Activated CD8-positive, alpha-beta memory T cell treated with anti-CD3 and anti-CD28 coated beads, Interleukin-2, amount 10 ng/mL, durations not matched to agents 7 days and 5 days (primary cell): ENCODE measurements at regions of chr19 and their contacts with region 1.

Region 1: GRCh38 chr19:10251792-10252694 is at the start of gene MRPL4:
- DNase-seq: peak; percentile 99
- ATAC-seq: peak; percentile 98
- H3K4me3 Mint-ChIP-seq: peak within 1 kb of the TSS; percentile 99
- H3K27ac Mint-ChIP-seq: peak within 1 kb of the TSS; percentile 96
- H3K4me1 Mint-ChIP-seq: peaks cover 37% of the 10 kb centered on the region
- H3K27me3 Mint-ChIP-seq: no peaks in the 10 kb centered on the region
- total RNA-seq, gene MRPL4: 85.4 to 112 TPM

Region 2: GRCh38 chr19:9934132-9934950 is 317.7 kb before region 1 on chr19:
- CTCF ChIA-PET with region 1: interaction called, 14 read pairs
- DNase-seq: peak; percentile 86
- ATAC-seq: peak; percentile 83
- H3K4me3 Mint-ChIP-seq: no peak overlapping the region
- H3K27ac Mint-ChIP-seq: no peak overlapping the region
- H3K4me1 Mint-ChIP-seq: peaks cover 14% of the 10 kb centered on the region
- H3K27me3 Mint-ChIP-seq: peaks cover 47% of the 10 kb centered on the region

Region 3: DNA sequence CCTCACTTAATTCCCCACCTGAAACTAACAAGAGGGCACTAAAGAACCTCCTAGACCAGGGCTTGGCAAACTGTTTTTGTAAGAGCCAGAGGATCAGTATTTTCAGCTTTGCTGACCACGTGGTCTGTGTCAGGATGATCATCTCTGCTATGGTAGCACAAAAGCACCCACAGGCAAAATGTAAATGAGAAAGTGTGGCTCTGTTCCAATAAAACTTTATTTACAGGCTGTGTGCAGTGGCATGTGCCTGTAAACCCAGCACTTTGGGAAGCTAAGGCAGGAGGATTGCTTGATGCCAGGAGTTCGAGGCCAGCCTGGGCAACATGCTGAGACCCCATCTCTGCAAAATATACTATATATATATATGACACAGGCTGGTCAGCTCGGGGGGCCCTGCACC is 88.5 kb before region 1 on chr19:
- CTCF ChIA-PET with region 1: interaction called, 11 read pairs
- DNase-seq: no peak
- ATAC-seq: no peak
- H3K4me3 Mint-ChIP-seq: no peak overlapping the region
- H3K27ac Mint-ChIP-seq: no peak overlapping the region
- H3K4me1 Mint-ChIP-seq: peaks cover 5% of the 10 kb centered on the region
- H3K27me3 Mint-ChIP-seq: no peaks in the 10 kb centered on the region

Region 4: DNA sequence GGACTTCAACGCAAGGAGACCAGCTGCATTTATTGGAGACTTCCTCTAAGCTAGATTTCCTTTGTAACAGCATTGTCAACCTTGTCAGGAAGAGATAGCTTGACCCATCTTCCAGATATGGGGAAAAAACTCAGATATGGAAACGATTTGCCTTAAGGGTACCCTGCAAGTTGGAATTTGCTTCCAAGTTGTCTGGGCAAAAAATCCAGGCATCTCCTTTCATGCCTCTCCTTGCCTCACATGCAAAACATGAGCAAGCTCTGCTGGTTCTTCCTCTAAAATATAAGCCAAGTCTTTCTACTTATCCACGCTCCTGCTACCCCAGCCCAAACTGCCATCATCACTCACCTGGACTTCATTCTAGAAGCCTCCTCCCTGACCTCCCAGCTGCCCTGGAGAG is 50.9 kb before region 1 on chr19:
- CTCF ChIA-PET with region 1: interaction called, 11 read pairs
- DNase-seq: no peak
- ATAC-seq: no peak
- H3K4me3 Mint-ChIP-seq: no peak overlapping the region
- H3K27ac Mint-ChIP-seq: peak overlapping the region; percentile 35
- H3K4me1 Mint-ChIP-seq: peaks cover 13% of the 10 kb centered on the region
- H3K27me3 Mint-ChIP-seq: no peaks in the 10 kb centered on the region

Region 5: DNA sequence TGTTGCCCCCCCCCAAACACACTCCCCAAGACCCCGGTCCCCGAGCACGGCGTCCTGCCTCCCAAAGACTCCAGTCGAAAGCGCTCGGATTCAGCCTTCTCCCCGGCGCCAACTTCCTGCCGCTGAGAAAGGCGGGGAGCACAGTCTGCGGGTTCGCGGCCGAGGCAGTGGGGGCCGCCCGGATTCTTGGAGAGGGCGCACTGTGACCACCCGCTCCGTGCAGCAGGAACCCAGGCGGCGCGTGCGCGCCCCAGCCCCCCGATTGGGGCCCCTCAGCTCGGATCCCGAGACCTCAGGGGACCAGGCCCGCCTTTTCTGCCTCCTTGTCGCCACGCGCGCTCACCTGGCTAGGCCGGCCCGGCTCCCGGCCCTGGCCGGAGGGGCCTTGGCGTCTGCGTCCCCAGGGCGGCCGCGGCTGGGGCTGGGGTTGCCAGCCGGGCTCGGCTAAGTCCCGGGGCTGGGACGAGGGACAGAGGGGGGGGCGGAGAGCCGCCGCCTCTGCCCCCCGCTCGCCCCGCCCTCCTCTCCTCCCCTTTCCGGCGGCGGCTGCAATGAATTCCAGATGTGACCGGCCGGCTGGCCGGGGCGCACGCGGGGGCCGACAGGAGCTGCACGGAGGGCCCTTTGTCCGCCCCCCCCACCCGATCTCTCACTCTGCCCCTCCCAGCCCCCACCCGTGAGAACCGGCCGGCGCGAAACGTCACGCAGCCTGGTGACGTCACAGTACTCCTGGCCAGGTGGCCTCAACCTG is 21.0 kb before region 1 on chr19 and contains the start of gene S1PR2:
- CTCF ChIA-PET with region 1: interaction called, 55 read pairs
- DNase-seq: peak; percentile 77
- ATAC-seq: peak; percentile 69
- H3K4me3 Mint-ChIP-seq: peak within 1 kb of the TSS; percentile 81
- H3K27ac Mint-ChIP-seq: peak within 1 kb of the TSS; percentile 69
- H3K4me1 Mint-ChIP-seq: peaks cover 26% of the 10 kb centered on the region
- H3K27me3 Mint-ChIP-seq: no peaks in the 10 kb centered on the region
- total RNA-seq, gene S1PR2: 6.1 to 8.5 TPM

Region 6: DNA sequence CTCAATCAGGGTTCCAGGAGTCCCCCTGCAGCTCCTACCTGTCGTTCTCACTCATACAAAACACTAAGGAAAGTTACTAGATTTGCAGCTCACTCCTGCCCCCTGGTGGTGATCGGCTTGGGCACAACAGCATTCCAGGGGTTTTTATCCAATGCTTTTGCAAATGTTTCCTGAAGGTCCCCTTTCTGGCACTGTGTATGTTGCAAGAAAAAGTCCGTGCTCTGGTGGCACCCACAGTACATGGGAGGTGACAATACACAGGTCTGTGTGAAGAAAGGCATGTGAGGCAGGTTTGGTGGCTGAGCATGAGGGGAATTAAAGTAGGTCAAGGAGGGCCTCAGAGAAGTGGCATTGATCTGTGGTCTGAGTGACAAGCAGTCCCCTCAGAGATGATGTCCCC is 136.9 kb after region 1 on chr19:
- CTCF ChIA-PET with region 1: interaction called, 339 read pairs
- DNase-seq: peak; percentile 85
- ATAC-seq: peak; percentile 73
- H3K4me3 Mint-ChIP-seq: no peak overlapping the region
- H3K27ac Mint-ChIP-seq: peak overlapping the region; percentile 3
- H3K4me1 Mint-ChIP-seq: peaks cover 6% of the 10 kb centered on the region
- H3K27me3 Mint-ChIP-seq: no peaks in the 10 kb centered on the region